SK-MEL-5 (cell line): ENCODE measurements at regions of chr1 and their contacts with region 1.

Region 1: DNA sequence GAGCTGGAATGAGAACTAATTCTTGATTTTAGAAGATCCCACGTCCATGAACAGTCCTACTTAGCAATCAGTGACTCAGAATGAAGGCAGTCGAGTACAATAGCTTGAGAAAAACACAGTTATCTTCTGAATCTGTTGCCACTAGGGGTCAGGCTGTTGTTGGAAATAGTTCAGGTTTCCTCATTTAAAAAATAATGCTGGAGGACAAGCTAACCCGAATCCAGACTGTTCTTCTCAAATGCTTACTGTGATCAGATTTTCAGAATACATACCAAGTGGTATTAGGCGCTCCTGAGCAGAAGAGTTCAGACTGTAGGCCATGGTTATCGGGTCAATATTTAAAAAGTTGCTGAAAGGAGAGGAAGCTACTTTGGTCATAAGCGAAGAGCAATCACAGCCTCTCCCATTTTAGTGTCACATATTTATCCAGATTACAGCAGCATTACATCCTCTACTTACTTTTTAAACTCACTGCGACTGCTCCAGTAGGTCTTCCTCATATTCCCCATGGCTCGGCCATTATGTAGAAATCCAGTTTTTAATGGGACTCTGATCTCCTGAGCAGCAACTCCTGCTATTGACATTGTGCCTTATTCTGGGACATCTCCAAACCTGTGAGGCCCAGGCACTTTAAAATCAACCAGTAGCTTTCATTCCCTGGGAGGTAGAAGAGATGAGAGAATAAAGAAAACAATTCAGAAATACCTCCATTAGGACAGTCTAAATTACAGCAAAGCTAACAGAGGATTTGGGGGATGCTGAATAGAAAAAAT is 10.9 kb downstream of the ERRFI1 start:
- DNase-seq: peak; percentile 82

Region 2: GRCh38 chr1:8314346-8315280 is 299.4 kb after region 1 on chr1:
- in situ Hi-C with region 1: loop called (anchors 25 kb)
- DNase-seq: peak; percentile 76